ENCODE measurements at regions of chr3 and their contacts with region 1.

Region 1: DNA sequence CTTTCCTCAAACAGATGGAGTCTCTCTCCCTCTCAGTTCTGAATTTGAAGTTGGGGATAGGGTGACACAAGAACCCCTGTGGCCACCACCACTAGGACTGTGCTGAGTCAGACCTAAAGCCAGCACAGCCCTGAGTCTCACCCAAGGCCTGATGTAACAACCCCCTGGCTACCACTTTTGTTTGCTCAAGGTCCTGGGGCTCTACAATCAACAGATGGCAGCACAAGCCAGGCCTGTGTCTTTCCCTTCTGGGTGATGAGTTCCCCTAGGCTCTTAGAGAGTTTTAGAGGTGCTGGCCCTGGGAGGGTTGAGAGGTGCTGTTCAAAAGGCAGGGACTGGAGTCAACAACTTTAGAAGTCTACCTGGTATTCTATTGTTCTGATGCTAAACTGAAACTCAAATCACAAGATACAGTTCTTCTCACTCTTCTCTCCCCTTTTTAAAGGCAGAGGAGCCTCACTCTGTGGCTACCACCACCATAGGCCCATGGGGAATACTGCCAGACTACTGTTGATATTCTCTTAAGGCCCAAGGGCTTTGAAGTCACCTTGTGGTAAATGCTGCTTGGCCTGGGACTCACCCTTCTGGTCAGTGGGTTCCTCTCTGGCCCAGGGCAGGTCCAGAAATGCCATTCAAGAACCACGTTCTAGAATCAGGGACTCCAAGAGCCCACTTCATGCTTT is 6.5 kb downstream of the OR5K4 start:
- DNase-seq: peak; percentile 49
- ATAC-seq: peak; percentile 99
- H3K4me3 ChIP-seq: no peak overlapping the region
- H3K27ac ChIP-seq: no peak overlapping the region
- H3K4me1 ChIP-seq: no peaks in the 10 kb centered on the region
- H3K27me3 ChIP-seq: no peaks in the 10 kb centered on the region; a peak in 1 of 5 replicates
- CTCF ChIP-seq: peak; percentile 67
- EP300 ChIP-seq: no peak
- POLR2A ChIP-seq: no peak
- RAD21 ChIP-seq: 0 out of 2 replicates have a peak, but pooled peaks have one; percentile 19

Region 2: GRCh38 chr3:98003306-98003969 is 356.7 kb before region 1 on chr3:
- CTCF ChIA-PET with region 1: no interaction called
- POLR2A ChIA-PET with region 1: no interaction called
- in situ Hi-C with region 1: no loop called
- intact Hi-C with region 1: no loop called
- DNase-seq: no peak
- ATAC-seq: no peak
- H3K4me3 ChIP-seq: no peak overlapping the region
- H3K27ac ChIP-seq: no peak overlapping the region
- H3K4me1 ChIP-seq: peaks cover 17% of the 10 kb centered on the region; the same call in 1 of the 2 replicates
- H3K27me3 ChIP-seq: no peaks in the 10 kb centered on the region
- CTCF ChIP-seq: no peak
- EP300 ChIP-seq: no peak
- POLR2A ChIP-seq: no peak
- RAD21 ChIP-seq: no peak

Region 3: GRCh38 chr3:98343647-98344507 is 16.3 kb before region 1 on chr3:
- CTCF ChIA-PET with region 1: no interaction called
- POLR2A ChIA-PET with region 1: no interaction called
- in situ Hi-C with region 1: no loop called
- intact Hi-C with region 1: no loop called
- DNase-seq: peak; percentile 62
- ATAC-seq: peak; percentile 90
- H3K4me3 ChIP-seq: no peak overlapping the region
- H3K27ac ChIP-seq: no peak overlapping the region
- H3K4me1 ChIP-seq: no peaks in the 10 kb centered on the region
- H3K27me3 ChIP-seq: no peaks in the 10 kb centered on the region
- CTCF ChIP-seq: peak; percentile 79
- EP300 ChIP-seq: no peak
- POLR2A ChIP-seq: no peak
- RAD21 ChIP-seq: no peak

Region 4: GRCh38 chr3:98433764-98434163 is 73.6 kb after region 1 on chr3:
- CTCF ChIA-PET with region 1: no interaction called
- POLR2A ChIA-PET with region 1: no interaction called
- in situ Hi-C with region 1: no loop called
- intact Hi-C with region 1: no loop called
- DNase-seq: no peak
- ATAC-seq: no peak
- H3K4me3 ChIP-seq: no peak overlapping the region
- H3K27ac ChIP-seq: no peak overlapping the region
- H3K4me1 ChIP-seq: no peaks in the 10 kb centered on the region
- H3K27me3 ChIP-seq: no peaks in the 10 kb centered on the region
- CTCF ChIP-seq: no peak
- EP300 ChIP-seq: no peak
- POLR2A ChIP-seq: no peak
- RAD21 ChIP-seq: no peak

Region 5: GRCh38 chr3:98573181-98573728 is 213.1 kb after region 1 on chr3:
- CTCF ChIA-PET with region 1: no interaction called
- POLR2A ChIA-PET with region 1: no interaction called
- in situ Hi-C with region 1: no loop called
- intact Hi-C with region 1: loop called (anchors 2 kb)
- DNase-seq: no peak
- ATAC-seq: no peak
- H3K4me3 ChIP-seq: no peak overlapping the region
- H3K27ac ChIP-seq: no peak overlapping the region
- H3K4me1 ChIP-seq: peaks cover 25% of the 10 kb centered on the region
- H3K27me3 ChIP-seq: no peaks in the 10 kb centered on the region
- CTCF ChIP-seq: 0 out of 2 replicates have a peak, but pooled peaks have one; percentile 12
- EP300 ChIP-seq: no peak
- POLR2A ChIP-seq: no peak
- RAD21 ChIP-seq: no peak

Region 6: DNA sequence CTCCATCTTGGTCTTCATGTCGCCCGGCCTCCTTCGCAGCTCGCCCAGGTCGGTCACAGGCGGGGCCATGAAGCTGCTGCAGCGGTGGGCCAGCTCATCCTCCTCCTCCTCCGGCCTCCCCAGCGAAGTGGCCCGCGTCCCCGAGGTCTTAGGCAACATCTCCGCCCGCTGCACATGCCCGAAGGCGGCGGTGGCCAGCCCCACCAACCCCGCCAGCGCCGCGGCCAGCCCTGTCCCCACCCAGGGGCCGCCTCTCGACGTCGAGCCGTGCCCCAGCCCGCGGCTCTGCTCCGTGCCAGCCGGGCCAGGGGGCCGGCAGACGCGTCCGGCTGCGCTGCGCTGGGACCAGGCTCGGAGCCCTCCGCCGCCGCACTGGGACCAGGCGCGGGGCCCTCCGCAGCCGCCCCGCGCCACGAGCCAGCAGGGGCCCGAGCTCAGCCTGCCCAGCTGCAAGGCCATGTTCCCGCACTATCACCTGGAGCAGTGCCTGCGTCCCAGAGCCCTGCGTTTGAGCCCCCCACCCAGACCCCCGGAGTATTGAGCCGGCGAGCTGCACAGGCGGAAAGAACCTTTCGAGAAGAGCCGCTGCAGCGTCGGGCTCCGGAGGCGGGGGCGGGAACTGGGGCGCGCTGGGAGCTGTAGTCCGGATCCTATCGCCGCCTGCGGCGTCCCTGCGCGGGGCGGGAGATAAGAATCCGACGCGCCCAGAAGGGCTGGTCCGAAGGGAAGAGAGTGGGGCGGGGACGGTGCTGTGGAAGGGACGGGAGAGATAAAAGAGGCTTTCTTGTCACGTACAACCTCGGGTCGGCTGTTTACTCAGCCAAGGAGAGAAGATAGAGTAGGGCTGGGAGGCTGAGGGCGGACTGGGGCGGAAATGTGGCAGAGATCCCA is 233.2 kb after region 1 on chr3 and contains the start of gene CPOX:
- CTCF ChIA-PET with region 1: no interaction called
- POLR2A ChIA-PET with region 1: no interaction called
- in situ Hi-C with region 1: no loop called
- intact Hi-C with region 1: loop called (anchors 5 kb)
- DNase-seq: peak; percentile 96
- ATAC-seq: peak; percentile 98
- H3K4me3 ChIP-seq: peak within 1 kb of the TSS; percentile 66 to 85 (median 82)
- H3K27ac ChIP-seq: peak within 1 kb of the TSS; percentile 66
- H3K4me1 ChIP-seq: peaks cover 51% of the 10 kb centered on the region
- H3K27me3 ChIP-seq: no peaks in the 10 kb centered on the region
- CTCF ChIP-seq: peak; percentile 23
- EP300 ChIP-seq: peak in 1 of 2 experiments; percentile 60; a peak in 2 of 4 replicates
- POLR2A ChIP-seq: peak; percentile 13 to 66; a peak in 3 of 4 replicates
- RAD21 ChIP-seq: no peak; the same call in 1 of the 2 replicates
- total RNA-seq, gene CPOX: 35.2 and 37.2 TPM in 2 replicates

Measured in HepG2 (cell line).